ENCODE measurements at regions of chr1 and their contacts with region 1.

Region 1: DNA sequence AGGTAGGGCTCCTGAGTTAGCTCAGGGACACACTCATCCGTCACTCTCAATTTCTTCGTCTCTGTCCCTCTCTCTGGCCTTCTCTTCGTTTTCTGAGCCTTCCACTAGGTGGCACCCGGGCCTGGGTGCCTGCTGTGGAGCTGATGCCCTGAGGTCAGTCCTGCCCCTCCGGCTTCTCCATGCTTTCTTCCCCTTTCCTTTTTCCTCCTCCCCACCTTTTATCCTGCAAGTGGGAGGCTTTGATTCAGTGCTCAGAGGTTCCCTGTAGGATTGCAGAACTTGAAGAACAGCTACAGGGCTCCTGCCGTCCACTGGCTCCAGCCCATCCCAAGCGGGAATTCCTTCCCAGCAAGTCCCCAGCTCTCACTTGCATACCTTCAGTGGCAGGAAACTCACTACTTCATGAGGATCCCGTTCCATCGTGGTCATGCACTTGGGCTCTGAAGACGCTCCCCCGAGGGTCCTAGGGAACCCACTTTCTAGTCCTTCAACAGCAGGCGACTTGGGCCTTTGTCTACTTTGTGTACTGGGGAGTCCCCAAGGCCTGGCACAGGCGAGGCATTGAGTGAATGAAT is 45.6 kb downstream of the SRRM1 start:
- DNase-seq: peak; percentile 79
- ATAC-seq: peak; percentile 85 to 92

Region 2: DNA sequence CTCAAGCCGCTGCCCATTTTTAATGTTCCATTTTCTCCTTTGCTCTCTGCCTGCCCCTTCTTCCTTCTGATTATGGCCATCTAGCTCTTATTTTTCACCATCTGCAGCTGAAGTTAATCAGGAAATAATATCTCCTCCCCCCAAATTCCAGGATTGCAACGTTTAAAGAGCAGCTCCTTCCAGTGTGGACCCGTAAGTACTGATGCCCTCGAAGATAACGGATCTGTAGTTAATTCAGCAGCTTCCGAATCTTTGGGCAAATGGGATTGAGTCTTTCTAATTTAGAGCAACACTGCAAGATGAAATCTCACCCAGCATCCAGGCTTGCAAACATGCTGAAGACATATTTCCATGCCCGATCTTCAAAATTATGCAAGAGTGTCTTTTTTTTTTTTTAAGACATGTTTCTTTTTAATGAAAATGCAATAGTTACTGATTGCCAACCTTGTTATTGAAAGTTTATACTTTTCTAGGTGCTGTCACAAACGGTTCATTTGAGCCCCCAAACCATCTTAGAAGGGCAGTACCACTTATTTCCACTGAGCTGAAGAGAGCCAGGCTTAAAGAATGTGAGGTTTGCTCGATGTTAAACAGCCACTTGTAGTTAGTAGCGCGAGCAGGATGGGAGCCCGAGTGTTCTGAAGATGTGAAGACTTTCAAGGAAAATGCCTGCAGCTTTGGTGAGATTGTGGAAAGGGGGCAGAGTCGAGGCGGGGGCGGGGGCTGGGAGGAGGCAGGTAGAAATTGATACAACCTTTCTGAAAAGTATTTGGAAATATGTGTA is 196.9 kb before region 1 on chr1:
- intact Hi-C with region 1: no loop called
- DNase-seq: no peak
- ATAC-seq: no peak

Region 3: DNA sequence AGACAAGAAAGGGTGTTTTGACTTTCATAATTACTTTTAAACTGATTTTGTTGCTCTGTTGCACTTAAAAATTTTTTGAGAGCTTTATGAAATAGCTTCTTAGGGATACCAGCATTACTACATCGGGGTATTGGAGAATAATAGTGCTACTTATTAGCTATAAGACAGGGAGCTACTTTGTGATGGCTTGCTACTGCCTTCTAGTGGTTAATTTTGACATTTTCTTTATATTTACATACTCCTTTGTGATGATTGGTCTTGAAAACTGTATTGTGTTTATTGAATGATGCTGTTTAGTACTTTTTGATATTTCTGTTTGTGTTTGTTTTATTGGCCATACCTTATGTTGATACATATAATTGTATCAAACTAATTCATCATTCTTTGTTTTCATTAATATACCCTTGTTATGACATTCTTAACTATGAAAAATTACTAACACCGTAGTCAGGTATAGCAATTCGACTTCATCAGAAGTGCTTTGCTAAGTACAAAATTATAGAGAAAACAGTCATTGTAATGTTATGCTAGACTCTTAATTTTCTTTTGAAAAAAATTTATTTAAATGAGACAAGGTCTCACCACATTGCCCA is 142.1 kb after region 1 on chr1:
- intact Hi-C with region 1: loop called (anchors 2 to 5 kb)
- DNase-seq: no peak
- ATAC-seq: peak; percentile 65 to 85